Endothelial cell of umbilical vein (primary cell): ENCODE measurements at regions of chr15 and their contacts with region 1.

Region 1: GRCh38 chr15:32844118-32844711 is 126.4 kb downstream of the GREM1 start:
- DNase-seq: peak; percentile 51
- H3K4me3 ChIP-seq: no peak overlapping the region
- H3K27ac ChIP-seq: no peak overlapping the region
- H3K4me1 ChIP-seq: no peaks in the 10 kb centered on the region
- H3K27me3 ChIP-seq: no peaks in the 10 kb centered on the region
- CTCF ChIP-seq: peak; percentile 45 to 61
- POLR2A ChIP-seq: no peak

Region 2: DNA sequence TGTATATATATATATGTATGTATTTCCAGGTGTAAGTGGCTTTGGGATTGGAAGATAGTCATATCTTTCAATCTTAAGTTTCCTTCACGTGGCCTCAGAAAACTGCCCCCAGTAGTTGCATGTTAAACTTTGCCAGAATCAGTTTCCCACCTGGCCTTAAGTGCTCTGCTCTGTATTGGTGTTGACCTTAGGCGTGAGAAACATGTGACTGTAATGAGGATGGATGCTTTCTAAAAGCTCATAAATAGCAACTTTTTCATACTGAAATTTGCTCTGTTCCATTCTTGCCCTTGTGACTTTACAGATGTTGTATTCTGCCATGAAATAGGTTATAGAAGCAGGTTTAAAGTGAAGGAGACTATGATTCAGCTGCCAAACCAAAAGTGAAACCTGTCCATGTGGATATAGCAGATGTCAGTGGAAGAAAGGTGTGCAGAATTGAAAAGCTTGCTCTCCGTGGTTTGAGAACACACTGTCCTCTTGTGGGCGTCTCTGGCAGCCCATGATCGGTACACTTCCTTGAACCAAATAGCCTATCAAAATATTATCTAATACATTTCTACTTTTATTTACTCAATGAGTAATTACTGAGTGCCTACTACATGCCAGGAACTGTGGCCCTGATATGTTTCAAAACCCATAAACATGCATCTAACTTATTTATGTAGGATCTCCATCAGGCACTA is 186.9 kb before region 1 on chr15:
- CTCF ChIA-PET with region 1: interaction called, 51 read pairs
- POLR2A ChIA-PET with region 1: no interaction called
- dilution Hi-C with region 1: no loop called
- intact Hi-C with region 1: loop called (anchors 1 kb)
- DNase-seq: no peak
- H3K4me3 ChIP-seq: no peak overlapping the region
- H3K27ac ChIP-seq: no peak overlapping the region
- H3K4me1 ChIP-seq: peaks cover 7% of the 10 kb centered on the region
- H3K27me3 ChIP-seq: no peaks in the 10 kb centered on the region
- CTCF ChIP-seq: no peak
- POLR2A ChIP-seq: no peak

Region 3: GRCh38 chr15:32818758-32819447 is 25.3 kb before region 1 on chr15:
- CTCF ChIA-PET with region 1: interaction called, 15 read pairs
- POLR2A ChIA-PET with region 1: no interaction called
- dilution Hi-C with region 1: no loop called
- intact Hi-C with region 1: no loop called
- DNase-seq: no peak
- H3K4me3 ChIP-seq: no peak overlapping the region
- H3K27ac ChIP-seq: no peak overlapping the region
- H3K4me1 ChIP-seq: peaks cover 22% of the 10 kb centered on the region
- H3K27me3 ChIP-seq: no peaks in the 10 kb centered on the region
- CTCF ChIP-seq: no peak
- POLR2A ChIP-seq: no peak

Region 4: DNA sequence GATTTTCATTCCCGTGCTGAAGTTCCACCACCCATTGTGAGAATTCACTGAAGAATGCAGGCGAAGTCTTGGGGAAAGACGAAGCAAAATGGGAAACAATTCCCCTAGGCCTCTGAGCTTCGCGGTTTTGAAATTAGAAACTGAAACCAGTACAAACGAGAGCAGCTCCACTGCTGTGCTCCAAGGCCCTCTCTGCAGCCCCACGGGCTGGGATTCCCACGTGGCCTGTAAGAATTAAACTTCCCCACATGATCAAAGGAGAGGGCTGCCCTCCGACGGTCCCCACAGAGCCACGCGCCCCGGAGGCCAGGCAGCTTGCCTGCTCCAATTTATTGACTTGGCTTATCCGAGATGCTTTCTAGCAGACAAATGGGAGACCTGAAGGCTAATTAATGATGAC is 17.5 kb after region 1 on chr15:
- CTCF ChIA-PET with region 1: interaction called, 62 read pairs
- POLR2A ChIA-PET with region 1: interaction called, 3 read pairs
- dilution Hi-C with region 1: no loop called
- intact Hi-C with region 1: no loop called
- DNase-seq: no peak
- H3K4me3 ChIP-seq: no peak overlapping the region
- H3K27ac ChIP-seq: no peak overlapping the region
- H3K4me1 ChIP-seq: peaks cover 7% of the 10 kb centered on the region
- H3K27me3 ChIP-seq: no peaks in the 10 kb centered on the region
- CTCF ChIP-seq: no peak
- POLR2A ChIP-seq: no peak

Region 5: GRCh38 chr15:32942401-32942841 is 98.2 kb after region 1 on chr15:
- CTCF ChIA-PET with region 1: interaction called, 293 read pairs
- POLR2A ChIA-PET with region 1: no interaction called
- dilution Hi-C with region 1: no loop called
- intact Hi-C with region 1: no loop called
- DNase-seq: no peak
- H3K4me3 ChIP-seq: no peak overlapping the region
- H3K27ac ChIP-seq: no peak overlapping the region
- H3K4me1 ChIP-seq: no peaks in the 10 kb centered on the region
- H3K27me3 ChIP-seq: peaks cover 0 to 7% of the 10 kb centered on the region in 2 experiments
- CTCF ChIP-seq: no peak
- POLR2A ChIP-seq: no peak

Region 6: GRCh38 chr15:32994810-32995424 is 150.7 kb after region 1 on chr15:
- CTCF ChIA-PET with region 1: interaction called, 76 read pairs
- POLR2A ChIA-PET with region 1: no interaction called
- dilution Hi-C with region 1: no loop called
- intact Hi-C with region 1: loop called (anchors 10 kb)
- DNase-seq: peak; percentile 63
- H3K4me3 ChIP-seq: no peak overlapping the region
- H3K27ac ChIP-seq: no peak overlapping the region
- H3K4me1 ChIP-seq: no peaks in the 10 kb centered on the region
- H3K27me3 ChIP-seq: no peaks in the 10 kb centered on the region
- CTCF ChIP-seq: peak; percentile 19 to 25
- POLR2A ChIP-seq: no peak